Aorta (tissue), 5 donors: ENCODE measurements at regions of chr6 and their contacts with region 1.

Region 1: GRCh38 chr6:73329201-73329600 is 24.9 kb downstream of the DPPA5 start:
- DNase-seq: no peak
- ATAC-seq: no peak
- H3K4me3 ChIP-seq: no peak overlapping the region
- H3K27ac ChIP-seq: no peak overlapping the region
- H3K4me1 ChIP-seq: no peaks in the 10 kb centered on the region
- H3K27me3 ChIP-seq: no peaks in the 10 kb centered on the region

Region 2: DNA sequence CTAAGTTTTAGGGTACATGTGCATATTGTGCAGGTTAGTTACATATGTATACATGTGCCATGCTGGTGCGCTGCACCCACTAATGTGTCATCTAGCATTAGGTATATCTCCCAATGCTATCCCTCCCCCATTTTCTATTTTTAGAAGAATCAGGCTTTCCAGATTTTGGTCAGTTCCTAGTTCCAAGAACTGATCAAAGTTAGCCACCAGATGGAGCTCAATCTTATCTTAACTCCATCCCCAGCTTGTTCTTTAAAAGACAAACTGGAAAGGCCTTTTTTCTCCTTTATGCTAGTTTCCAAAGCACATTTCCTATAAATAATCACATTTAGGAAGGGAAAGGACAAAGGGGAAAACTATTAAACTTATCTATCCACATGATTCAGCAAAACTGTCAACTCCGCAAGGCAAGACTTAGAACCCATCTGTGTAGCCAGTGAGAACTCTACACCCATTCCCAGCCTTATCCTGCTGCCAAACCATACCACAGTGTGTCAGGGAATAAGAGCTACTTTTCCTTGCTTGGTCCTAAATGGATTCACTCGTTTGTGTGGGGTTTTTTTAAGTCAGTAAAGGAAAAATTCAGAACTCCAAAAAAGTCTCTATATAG is 43.4 kb before region 1 on chr6:
- intact Hi-C with region 1: loop called (anchors 1 to 2 kb)
- DNase-seq: no peak
- ATAC-seq: peak; percentile 61
- H3K4me3 ChIP-seq: no peak overlapping the region
- H3K27ac ChIP-seq: no peak overlapping the region
- H3K4me1 ChIP-seq: peaks cover 0 to 2% of the 10 kb centered on the region in 2 donors
- H3K27me3 ChIP-seq: no peaks in the 10 kb centered on the region

Region 3: GRCh38 chr6:73782911-73783310 is 453.7 kb after region 1 on chr6:
- intact Hi-C with region 1: no loop called
- DNase-seq: no peak
- ATAC-seq: no peak
- H3K4me3 ChIP-seq: no peak overlapping the region
- H3K27ac ChIP-seq: no peak overlapping the region
- H3K4me1 ChIP-seq: no peaks in the 10 kb centered on the region
- H3K27me3 ChIP-seq: no peaks in the 10 kb centered on the region